ENCODE measurements at regions of chr1 and their contacts with region 1.

Region 1: DNA sequence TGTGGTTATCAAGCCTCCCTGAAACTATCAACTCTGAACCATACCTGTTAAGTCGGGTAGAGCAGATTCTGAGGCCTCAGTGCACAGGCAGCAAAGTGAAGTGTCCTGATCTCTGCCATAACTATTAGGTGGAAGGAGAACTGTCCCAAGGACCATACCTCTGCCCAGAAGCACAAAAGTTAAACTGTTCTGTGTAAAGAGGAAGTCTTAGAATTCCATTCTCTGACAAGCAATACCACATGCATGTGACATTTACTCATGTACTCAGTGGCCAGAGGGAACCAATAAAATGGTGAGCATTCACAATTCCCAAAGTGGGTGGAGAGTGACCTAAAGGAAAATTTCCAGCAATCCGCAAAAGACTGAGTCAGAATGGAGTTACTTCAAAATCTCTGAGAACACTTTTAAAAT is 61.0 kb downstream of the TOR3A start:
- DNase-seq: peak; percentile 30
- H3K4me3 Mint-ChIP-seq: peak overlapping the region; percentile 32
- H3K27ac Mint-ChIP-seq: peak overlapping the region; percentile 68
- H3K4me1 Mint-ChIP-seq: peaks cover 41% of the 10 kb centered on the region
- H3K27me3 Mint-ChIP-seq: no peaks in the 10 kb centered on the region

Region 2: GRCh38 chr1:178931858-178932551 is 210.9 kb before region 1 on chr1:
- CTCF ChIA-PET with region 1: no interaction called
- intact Hi-C with region 1: no loop called
- DNase-seq: no peak
- H3K4me3 Mint-ChIP-seq: no peak overlapping the region
- H3K27ac Mint-ChIP-seq: no peak overlapping the region
- H3K4me1 Mint-ChIP-seq: no peaks in the 10 kb centered on the region
- H3K27me3 Mint-ChIP-seq: peaks cover 3% of the 10 kb centered on the region

Region 3: DNA sequence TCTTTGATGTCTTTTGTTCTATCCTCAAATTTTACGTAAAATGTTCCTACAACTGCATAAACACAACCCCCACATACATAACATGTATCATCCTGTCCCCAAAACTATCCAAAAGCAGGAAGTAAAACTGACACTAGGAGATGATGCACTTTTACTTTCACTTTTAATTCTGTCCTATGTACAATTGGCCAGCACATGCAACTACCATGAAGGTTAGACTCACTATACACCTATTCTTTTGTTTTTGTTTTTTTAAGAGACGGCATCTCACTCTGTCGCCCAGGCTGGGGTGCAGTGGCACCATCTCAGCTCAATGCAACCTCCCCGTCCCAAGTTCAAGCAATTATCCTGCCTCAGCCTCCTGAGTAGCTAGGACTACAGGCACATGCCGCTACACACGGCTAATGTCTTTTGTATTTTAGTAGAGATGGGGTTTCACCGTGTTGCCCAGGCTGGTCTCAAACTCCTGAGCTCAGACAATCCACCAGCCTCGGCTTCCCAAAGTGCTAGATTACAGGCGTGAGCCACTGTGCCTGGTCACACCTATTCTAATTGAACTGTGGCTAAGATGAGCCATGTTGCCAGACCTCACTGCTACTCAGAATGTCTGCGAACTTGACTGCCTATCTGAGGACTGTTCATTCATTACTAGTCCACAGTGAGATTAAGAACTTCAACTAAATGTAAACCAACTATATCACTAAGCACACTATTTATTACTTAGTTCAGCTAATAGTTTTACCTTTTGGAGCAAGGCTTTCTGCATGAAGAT is 13.0 kb before region 1 on chr1:
- CTCF ChIA-PET with region 1: interaction called, 3 read pairs
- intact Hi-C with region 1: loop called (anchors 1 kb)
- DNase-seq: peak; percentile 24
- H3K4me3 Mint-ChIP-seq: peak overlapping the region; percentile 60
- H3K27ac Mint-ChIP-seq: peak overlapping the region; percentile 87
- H3K4me1 Mint-ChIP-seq: peaks cover 37% of the 10 kb centered on the region
- H3K27me3 Mint-ChIP-seq: no peaks in the 10 kb centered on the region

Region 4: GRCh38 chr1:179217943-179218507 is 75.1 kb after region 1 on chr1:
- CTCF ChIA-PET with region 1: no interaction called
- intact Hi-C with region 1: loop called (anchors 1 kb)
- DNase-seq: no peak
- H3K4me3 Mint-ChIP-seq: no peak overlapping the region
- H3K27ac Mint-ChIP-seq: no peak overlapping the region
- H3K4me1 Mint-ChIP-seq: peaks cover 20% of the 10 kb centered on the region
- H3K27me3 Mint-ChIP-seq: no peaks in the 10 kb centered on the region

Region 5: DNA sequence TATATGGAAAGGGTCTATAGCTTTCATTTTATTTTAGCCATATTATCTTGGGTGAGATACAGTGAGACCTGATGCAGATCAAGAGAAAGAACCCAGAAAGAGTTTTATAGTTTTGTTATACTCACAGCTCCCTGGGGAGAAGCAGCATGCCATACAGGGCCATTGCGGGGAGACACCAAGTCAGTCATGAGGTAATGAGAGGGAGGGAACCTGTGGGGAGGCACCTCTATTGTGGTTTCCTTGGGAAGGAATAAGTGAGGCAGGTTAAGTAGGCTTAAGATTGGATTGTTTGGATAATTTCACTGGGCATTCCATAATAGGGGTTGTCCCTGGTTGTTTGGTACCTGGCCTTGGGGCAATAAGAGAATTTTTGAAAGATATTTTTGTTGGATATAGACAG is 242.6 kb after region 1 on chr1:
- CTCF ChIA-PET with region 1: no interaction called
- intact Hi-C with region 1: no loop called
- DNase-seq: no peak
- H3K4me3 Mint-ChIP-seq: no peak overlapping the region
- H3K27ac Mint-ChIP-seq: no peak overlapping the region
- H3K4me1 Mint-ChIP-seq: no peaks in the 10 kb centered on the region
- H3K27me3 Mint-ChIP-seq: no peaks in the 10 kb centered on the region

Region 6: DNA sequence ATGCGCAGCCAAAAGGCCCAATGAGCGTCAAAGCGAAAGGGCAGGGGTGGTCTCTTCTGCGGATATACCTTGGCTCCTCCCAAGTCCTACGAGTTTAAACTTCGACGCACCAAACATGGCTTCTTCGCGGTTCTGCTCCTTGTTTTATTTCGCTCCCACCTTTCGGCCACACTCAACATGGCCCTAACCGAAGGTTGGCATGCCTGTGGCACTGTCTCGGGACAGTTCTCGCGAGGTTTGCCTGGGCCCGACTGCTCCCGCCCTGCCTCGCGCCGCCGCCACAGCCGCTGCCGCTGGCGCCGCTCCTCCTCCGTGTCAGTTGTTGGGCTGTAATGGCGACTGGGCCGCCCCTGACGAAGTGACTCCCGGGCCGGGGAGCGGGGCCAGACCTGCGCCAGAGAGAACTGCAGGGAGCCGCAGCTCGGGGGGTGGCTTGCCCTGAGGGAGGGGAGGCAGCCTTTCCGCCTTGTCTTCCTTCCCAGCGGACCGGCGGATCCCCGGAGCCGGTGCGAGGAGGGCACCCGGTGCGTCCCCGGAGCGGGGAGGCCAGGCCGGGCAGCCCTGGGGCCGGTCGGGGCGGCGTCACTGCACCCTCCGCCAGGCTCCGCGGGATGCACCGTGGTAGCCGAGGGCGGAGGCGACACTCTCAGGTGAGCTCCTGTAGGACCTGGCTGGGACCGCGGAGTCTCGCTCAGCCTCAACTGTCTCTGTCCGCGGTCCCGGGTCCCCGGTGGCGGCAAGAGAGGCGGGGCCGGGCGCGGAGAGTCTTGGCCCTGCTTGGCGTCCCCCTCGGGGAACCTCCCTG is 811.8 kb after region 1 on chr1 and contains the start of gene CEP350:
- CTCF ChIA-PET with region 1: no interaction called
- intact Hi-C with region 1: loop called (anchors 10 kb)
- DNase-seq: peak; percentile 99
- H3K4me3 Mint-ChIP-seq: peak within 1 kb of the TSS; percentile 85
- H3K27ac Mint-ChIP-seq: peak within 1 kb of the TSS; percentile 95
- H3K4me1 Mint-ChIP-seq: peaks cover 41% of the 10 kb centered on the region
- H3K27me3 Mint-ChIP-seq: no peaks in the 10 kb centered on the region
- total RNA-seq, gene CEP350: 30.3 to 36.0 TPM

Measured in activated naive CD4-positive, alpha-beta T cell treated with anti-CD3 and anti-CD28 coated beads for 36 hours (primary cell).